ENCODE measurements at regions of chr1 and their contacts with region 1.

Region 1: GRCh38 chr1:8992936-8993687 is 33.1 kb downstream of the SLC2A7 start:
- DNase-seq: no peak
- H3K4me3 ChIP-seq: no peak overlapping the region
- H3K27ac ChIP-seq: no peak overlapping the region
- H3K4me1 ChIP-seq: no peaks in the 10 kb centered on the region
- H3K27me3 ChIP-seq: no peaks in the 10 kb centered on the region
- CTCF ChIP-seq: peak in 2 of 3 experiments; percentile 2 to 25; a peak in 1 of 4 replicates
- EP300 ChIP-seq: no peak
- POLR2A ChIP-seq: no peak
- RAD21 ChIP-seq: no peak; a peak in 2 of 4 replicates

Region 2: GRCh38 chr1:8913111-8913856 is 79.8 kb before region 1 on chr1:
- CTCF ChIA-PET with region 1: interaction called, 25 read pairs
- POLR2A ChIA-PET with region 1: no interaction called
- DNase-seq: no peak
- H3K4me3 ChIP-seq: no peak overlapping the region
- H3K27ac ChIP-seq: no peak overlapping the region
- H3K4me1 ChIP-seq: peaks cover 0 to 11% (median 7%) of the 10 kb centered on the region in 4 experiments; a peak in 5 of 7 replicates
- H3K27me3 ChIP-seq: no peaks in the 10 kb centered on the region
- CTCF ChIP-seq: no peak
- EP300 ChIP-seq: no peak
- POLR2A ChIP-seq: no peak
- RAD21 ChIP-seq: no peak